ENCODE measurements at regions of chr3 and their contacts with region 1.

Region 1: GRCh38 chr3:100002599-100003350 is 111.5 kb downstream of the FILIP1L start:
- DNase-seq: peak; percentile 81 to 85
- H3K4me3 ChIP-seq: no peak overlapping the region
- H3K4me3 Mint-ChIP-seq: no peak overlapping the region
- H3K27ac Mint-ChIP-seq: peak overlapping the region; percentile 84
- H3K4me1 ChIP-seq: peaks cover 44% of the 10 kb centered on the region
- H3K4me1 Mint-ChIP-seq: peaks cover 42% of the 10 kb centered on the region
- H3K27me3 ChIP-seq: no peaks in the 10 kb centered on the region
- H3K27me3 Mint-ChIP-seq: no peaks in the 10 kb centered on the region
- CTCF ChIP-seq: no peak

Region 2: DNA sequence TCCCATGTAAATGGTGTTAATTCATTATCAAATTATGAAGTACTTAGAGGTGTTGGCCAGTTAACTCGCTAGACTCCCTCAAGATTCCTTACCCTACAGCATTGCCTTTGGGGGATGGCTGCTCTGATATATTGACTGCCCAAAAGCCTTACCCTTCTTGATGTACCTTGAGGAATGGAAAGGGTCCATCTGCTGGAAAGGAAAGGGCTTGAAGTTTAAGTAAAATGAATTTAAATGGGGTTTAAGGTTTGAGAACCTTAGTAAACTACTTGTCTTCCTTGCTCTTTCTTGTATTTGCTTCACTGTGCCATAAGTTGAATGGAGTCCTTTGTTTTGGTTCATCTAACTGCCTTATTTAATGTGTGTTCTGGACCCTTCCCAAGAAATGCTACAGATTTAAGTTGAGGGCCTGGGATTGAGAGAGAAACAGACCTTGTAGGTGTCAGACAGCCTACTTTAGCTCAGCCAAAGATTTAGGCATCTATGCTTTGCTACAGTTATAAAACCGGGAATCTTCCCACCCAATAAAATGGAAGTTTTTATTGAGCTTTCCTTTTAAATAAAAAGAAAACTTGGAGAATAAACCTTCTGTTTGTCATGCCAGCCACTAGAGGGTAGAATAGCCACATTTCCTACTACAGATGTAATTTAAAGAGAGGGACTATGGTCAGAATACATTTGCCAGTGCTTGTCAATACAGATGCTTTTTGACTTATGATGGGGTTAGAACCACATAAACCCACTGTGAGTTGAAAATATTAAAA is 159.8 kb before region 1 on chr3:
- CTCF ChIA-PET with region 1: no interaction called
- POLR2A ChIA-PET with region 1: no interaction called
- intact Hi-C with region 1: loop called (anchors 2 kb)
- DNase-seq: peak in 1 of 2 experiments; percentile 33
- H3K4me3 ChIP-seq: no peak overlapping the region
- H3K4me3 Mint-ChIP-seq: no peak overlapping the region
- H3K27ac Mint-ChIP-seq: no peak overlapping the region
- H3K4me1 ChIP-seq: peaks cover 12% of the 10 kb centered on the region; the same call in 1 of the 2 replicates
- H3K4me1 Mint-ChIP-seq: peaks cover 6% of the 10 kb centered on the region
- H3K27me3 ChIP-seq: no peaks in the 10 kb centered on the region
- H3K27me3 Mint-ChIP-seq: no peaks in the 10 kb centered on the region
- CTCF ChIP-seq: peak; percentile 63 to 67

Region 3: GRCh38 chr3:99929745-99930139 is 73.0 kb before region 1 on chr3:
- CTCF ChIA-PET with region 1: no interaction called
- POLR2A ChIA-PET with region 1: no interaction called
- intact Hi-C with region 1: loop called (anchors 1 kb)
- DNase-seq: no peak
- H3K4me3 ChIP-seq: no peak overlapping the region
- H3K4me3 Mint-ChIP-seq: no peak overlapping the region
- H3K27ac Mint-ChIP-seq: no peak overlapping the region
- H3K4me1 ChIP-seq: peaks cover 42% of the 10 kb centered on the region
- H3K4me1 Mint-ChIP-seq: peaks cover 20% of the 10 kb centered on the region
- H3K27me3 ChIP-seq: no peaks in the 10 kb centered on the region
- H3K27me3 Mint-ChIP-seq: no peaks in the 10 kb centered on the region
- CTCF ChIP-seq: no peak

Region 4: GRCh38 chr3:100024520-100025303 is 21.9 kb after region 1 on chr3:
- CTCF ChIA-PET with region 1: no interaction called
- POLR2A ChIA-PET with region 1: no interaction called
- intact Hi-C with region 1: loop called (anchors 2 kb)
- DNase-seq: peak; percentile 43 to 67
- H3K4me3 ChIP-seq: no peak overlapping the region
- H3K4me3 Mint-ChIP-seq: peak overlapping the region; percentile 53
- H3K27ac Mint-ChIP-seq: no peak overlapping the region
- H3K4me1 ChIP-seq: peaks cover 62% of the 10 kb centered on the region
- H3K4me1 Mint-ChIP-seq: peaks cover 27% of the 10 kb centered on the region
- H3K27me3 ChIP-seq: no peaks in the 10 kb centered on the region
- H3K27me3 Mint-ChIP-seq: no peaks in the 10 kb centered on the region
- CTCF ChIP-seq: no peak

Measured in Caco-2 (cell line).